HepG2 (cell line): ENCODE measurements at regions of chr9 and their contacts with region 1.

Region 1: GRCh38 chr9:130107234-130107861 is 53.6 kb downstream of the GPR107 start:
- DNase-seq: peak; percentile 55
- ATAC-seq: peak; percentile 86
- H3K4me3 ChIP-seq: no peak overlapping the region
- H3K27ac ChIP-seq: no peak overlapping the region
- H3K4me1 ChIP-seq: no peaks in the 10 kb centered on the region
- H3K27me3 ChIP-seq: no peaks in the 10 kb centered on the region
- CTCF ChIP-seq: peak; percentile 83
- EP300 ChIP-seq: no peak
- POLR2A ChIP-seq: no peak
- RAD21 ChIP-seq: no peak; the same call in 1 of the 2 replicates

Region 2: GRCh38 chr9:129884220-129885017 is 222.9 kb before region 1 on chr9:
- CTCF ChIA-PET with region 1: interaction called, 3 read pairs
- POLR2A ChIA-PET with region 1: no interaction called
- in situ Hi-C with region 1: loop called (anchors 10 kb)
- intact Hi-C with region 1: no loop called
- DNase-seq: peak; percentile 66
- ATAC-seq: peak; percentile 81
- H3K4me3 ChIP-seq: peak overlapping the region; percentile 58 to 86 (median 74)
- H3K27ac ChIP-seq: peak overlapping the region; percentile 41
- H3K4me1 ChIP-seq: peaks cover 15% of the 10 kb centered on the region
- H3K27me3 ChIP-seq: no peaks in the 10 kb centered on the region; a peak in 1 of 5 replicates
- CTCF ChIP-seq: no peak
- EP300 ChIP-seq: no peak
- POLR2A ChIP-seq: peak; percentile 54 to 75; a peak in 3 of 4 replicates
- RAD21 ChIP-seq: no peak

Region 3: GRCh38 chr9:130235897-130236668 is 128.7 kb after region 1 on chr9:
- CTCF ChIA-PET with region 1: interaction called, 30 read pairs
- POLR2A ChIA-PET with region 1: no interaction called
- in situ Hi-C with region 1: loop called (anchors 5 kb)
- intact Hi-C with region 1: loop called (anchors 1 kb)
- DNase-seq: peak; percentile 25
- ATAC-seq: peak; percentile 27
- H3K4me3 ChIP-seq: no peak overlapping the region
- H3K27ac ChIP-seq: no peak overlapping the region
- H3K4me1 ChIP-seq: peaks cover 34% of the 10 kb centered on the region
- H3K27me3 ChIP-seq: no peaks in the 10 kb centered on the region
- CTCF ChIP-seq: peak; percentile 92
- EP300 ChIP-seq: no peak
- POLR2A ChIP-seq: no peak
- RAD21 ChIP-seq: peak; percentile 85